ENCODE measurements at regions of chr10 and their contacts with region 1.

Region 1: DNA sequence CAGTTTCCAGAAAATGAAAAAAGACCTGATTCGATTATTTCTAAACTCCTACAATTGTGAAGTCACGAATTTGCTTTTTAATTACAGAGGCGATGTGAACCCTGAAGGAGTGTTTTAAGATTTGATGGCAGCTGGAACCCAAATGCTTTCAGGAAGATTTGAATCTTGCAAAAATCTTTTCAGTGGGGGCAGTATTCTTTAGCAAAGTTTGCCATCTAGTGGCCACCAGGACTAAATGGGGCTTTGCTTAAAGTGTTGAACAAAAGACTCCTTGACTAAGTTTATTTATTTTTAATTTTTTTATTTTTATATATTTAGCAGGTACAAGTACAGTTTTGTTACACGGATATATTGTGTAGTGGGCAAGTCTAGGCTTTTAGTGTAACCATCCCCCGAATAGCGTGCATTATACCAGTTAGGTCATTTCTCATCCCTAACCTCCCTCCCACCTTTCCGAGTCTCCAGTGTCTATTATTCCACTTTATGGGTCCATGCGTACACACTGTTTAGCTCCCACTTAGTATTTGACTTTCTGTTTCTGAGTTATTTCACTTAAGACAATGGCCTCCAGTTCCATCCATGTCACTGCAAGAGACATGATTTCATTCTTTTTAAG is 98.8 kb downstream of the CACNB2 start:
- DNase-seq: peak; percentile 10
- ATAC-seq: no peak
- H3K4me3 ChIP-seq: no peak overlapping the region
- H3K27ac ChIP-seq: no peak overlapping the region
- H3K4me1 ChIP-seq: no peaks in the 10 kb centered on the region
- H3K27me3 ChIP-seq: no peaks in the 10 kb centered on the region; a peak in 1 of 5 replicates
- CTCF ChIP-seq: peak; percentile 41
- EP300 ChIP-seq: no peak
- POLR2A ChIP-seq: no peak
- RAD21 ChIP-seq: no peak

Region 2: GRCh38 chr10:17737027-17737965 is 501.7 kb before region 1 on chr10:
- CTCF ChIA-PET with region 1: no interaction called
- POLR2A ChIA-PET with region 1: no interaction called
- in situ Hi-C with region 1: no loop called
- intact Hi-C with region 1: loop called (anchors 1 kb)
- DNase-seq: peak; percentile 24
- ATAC-seq: no peak; the same call in 2 of the 3 replicates
- H3K4me3 ChIP-seq: no peak overlapping the region
- H3K27ac ChIP-seq: no peak overlapping the region
- H3K4me1 ChIP-seq: peaks cover 7% of the 10 kb centered on the region; the same call in 1 of the 2 replicates
- H3K27me3 ChIP-seq: no peaks in the 10 kb centered on the region
- CTCF ChIP-seq: peak; percentile 51
- EP300 ChIP-seq: no peak
- POLR2A ChIP-seq: no peak
- RAD21 ChIP-seq: no peak

Region 3: DNA sequence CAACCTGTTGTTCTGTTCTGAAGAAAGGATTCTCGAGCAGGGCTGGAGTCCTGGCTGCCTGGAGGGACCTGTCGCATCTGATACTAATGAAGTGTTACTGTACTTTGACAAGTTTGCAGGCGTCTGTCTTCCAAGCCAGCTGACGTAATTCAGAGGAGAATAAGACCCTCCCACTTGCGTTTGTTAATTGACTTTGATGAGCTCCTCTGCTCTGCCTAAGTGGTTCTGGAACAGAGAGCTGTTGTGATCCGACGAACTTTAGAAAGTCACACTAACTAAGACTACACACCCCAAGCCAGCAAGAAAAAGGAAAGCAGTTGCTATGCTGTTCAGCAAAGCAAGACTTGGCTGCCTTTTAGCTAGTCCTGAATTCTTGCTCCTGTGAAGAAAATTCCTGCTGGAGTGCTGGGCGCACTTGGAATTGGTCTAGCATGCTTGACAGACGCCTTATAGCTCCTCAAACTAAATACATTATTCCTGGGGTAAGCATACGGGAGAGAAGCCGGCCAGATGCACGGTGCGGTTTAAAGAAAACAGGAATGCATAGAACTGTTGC is 101.6 kb after region 1 on chr10:
- CTCF ChIA-PET with region 1: no interaction called
- POLR2A ChIA-PET with region 1: no interaction called
- in situ Hi-C with region 1: no loop called
- intact Hi-C with region 1: no loop called
- DNase-seq: no peak
- ATAC-seq: no peak
- H3K4me3 ChIP-seq: no peak overlapping the region
- H3K27ac ChIP-seq: no peak overlapping the region
- H3K4me1 ChIP-seq: no peaks in the 10 kb centered on the region
- H3K27me3 ChIP-seq: no peaks in the 10 kb centered on the region; a peak in 1 of 5 replicates
- CTCF ChIP-seq: no peak
- EP300 ChIP-seq: no peak
- POLR2A ChIP-seq: no peak
- RAD21 ChIP-seq: no peak